ENCODE measurements at regions of chr3 and their contacts with region 1.

Region 1: GRCh38 chr3:187679638-187680396 is 9.6 kb upstream of the SST start:
- DNase-seq: peak in 2 of 3 donors; percentile 81 to 83
- ATAC-seq: peak; percentile 89
- H3K4me3 ChIP-seq: no peak overlapping the region
- H3K4me1 ChIP-seq: no peaks in the 10 kb centered on the region
- CTCF ChIP-seq: peak; percentile 84

Region 2: DNA sequence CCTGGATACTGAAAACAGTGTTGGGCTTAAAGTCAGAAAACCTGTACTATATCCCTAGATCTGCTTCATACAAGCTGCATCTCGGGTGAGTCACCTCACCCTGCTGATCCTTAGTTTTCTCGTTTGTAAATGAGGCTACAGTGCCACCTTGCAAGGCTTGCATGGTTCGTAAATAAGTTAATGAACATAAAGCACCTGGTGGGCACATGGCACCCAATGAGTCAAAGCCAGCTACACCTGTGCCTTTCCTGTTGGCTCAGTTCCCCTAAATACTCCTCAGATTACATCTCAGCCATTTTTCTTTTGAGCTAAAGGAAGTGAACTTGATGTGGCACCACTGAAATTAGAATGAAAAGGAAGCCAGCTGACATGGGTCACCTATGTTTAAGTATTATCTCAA is 456.0 kb before region 1 on chr3:
- intact Hi-C with region 1: loop called in 1 of 2 experiments (anchors 5 kb)
- DNase-seq: no peak
- ATAC-seq: no peak
- H3K4me3 ChIP-seq: no peak overlapping the region
- H3K4me1 ChIP-seq: no peaks in the 10 kb centered on the region
- CTCF ChIP-seq: no peak

Region 3: GRCh38 chr3:187319699-187320302 is 360.0 kb before region 1 on chr3:
- intact Hi-C with region 1: loop called (anchors 1 to 5 kb)
- DNase-seq: peak in 2 of 3 donors; percentile 60 to 90
- ATAC-seq: peak; percentile 94
- H3K4me3 ChIP-seq: no peak overlapping the region
- H3K4me1 ChIP-seq: no peaks in the 10 kb centered on the region
- CTCF ChIP-seq: peak; percentile 82